ENCODE measurements at regions of chr19 and their contacts with region 1.

Region 1: GRCh38 chr19:11137542-11138384 is 17.8 kb downstream of the SPC24 start:
- DNase-seq: no peak
- ATAC-seq: peak; percentile 35
- H3K4me3 ChIP-seq: peak overlapping the region; percentile 26 to 50
- H3K27ac ChIP-seq: peak overlapping the region; percentile 92
- H3K4me1 ChIP-seq: peaks cover 50 to 57% of the 10 kb centered on the region in 2 experiments
- H3K27me3 ChIP-seq: no peaks in the 10 kb centered on the region
- CTCF ChIP-seq: peak; percentile 78 to 86 (median 79)
- POLR2A ChIP-seq: no peak
- RAD21 ChIP-seq: peak; percentile 95

Region 2: GRCh38 chr19:11197264-11198174 is 59.8 kb after region 1 on chr19 and contains the start of gene KANK2:
- CTCF ChIA-PET with region 1: interaction called, 4 read pairs
- POLR2A ChIA-PET with region 1: interaction called, 10 read pairs
- RAD21 ChIA-PET with region 1: no interaction called
- intact Hi-C with region 1: no loop called
- DNase-seq: peak; percentile 50
- ATAC-seq: peak; percentile 89
- H3K4me3 ChIP-seq: peak within 1 kb of the TSS; percentile 63 to 78
- H3K27ac ChIP-seq: peak within 1 kb of the TSS; percentile 81
- H3K4me1 ChIP-seq: peaks cover 18 to 25% of the 10 kb centered on the region in 2 experiments
- H3K27me3 ChIP-seq: no peaks in the 10 kb centered on the region
- CTCF ChIP-seq: no peak
- POLR2A ChIP-seq: peak; percentile 35
- RAD21 ChIP-seq: no peak
- total RNA-seq, gene KANK2: 43.6 TPM

Measured in HCT116 (cell line).